GM18951 (cell line): ENCODE measurements at regions of chr9 and their contacts with region 1.

Region 1: DNA sequence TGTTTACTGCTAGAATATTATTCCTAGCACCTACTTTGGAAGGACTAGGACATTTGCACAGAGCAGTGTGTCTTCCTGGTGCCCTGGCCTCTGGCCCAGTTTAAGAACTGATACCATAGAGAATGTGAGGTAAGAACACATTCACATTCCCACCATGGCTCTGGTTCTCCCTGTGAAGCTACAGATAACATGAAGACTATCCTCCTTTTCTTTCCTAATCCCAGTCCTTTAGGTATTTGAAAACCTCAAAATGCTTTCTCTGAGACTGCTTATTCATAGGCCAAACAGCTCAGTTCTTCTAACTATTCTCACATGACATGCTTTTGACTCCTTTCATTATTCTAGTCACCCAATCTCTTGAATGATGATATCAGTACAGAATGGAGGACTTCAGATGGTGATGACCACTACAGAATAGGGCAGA is 11.9 kb downstream of the FAM219A start:
- POLR2A ChIP-seq: no peak

Region 2: DNA sequence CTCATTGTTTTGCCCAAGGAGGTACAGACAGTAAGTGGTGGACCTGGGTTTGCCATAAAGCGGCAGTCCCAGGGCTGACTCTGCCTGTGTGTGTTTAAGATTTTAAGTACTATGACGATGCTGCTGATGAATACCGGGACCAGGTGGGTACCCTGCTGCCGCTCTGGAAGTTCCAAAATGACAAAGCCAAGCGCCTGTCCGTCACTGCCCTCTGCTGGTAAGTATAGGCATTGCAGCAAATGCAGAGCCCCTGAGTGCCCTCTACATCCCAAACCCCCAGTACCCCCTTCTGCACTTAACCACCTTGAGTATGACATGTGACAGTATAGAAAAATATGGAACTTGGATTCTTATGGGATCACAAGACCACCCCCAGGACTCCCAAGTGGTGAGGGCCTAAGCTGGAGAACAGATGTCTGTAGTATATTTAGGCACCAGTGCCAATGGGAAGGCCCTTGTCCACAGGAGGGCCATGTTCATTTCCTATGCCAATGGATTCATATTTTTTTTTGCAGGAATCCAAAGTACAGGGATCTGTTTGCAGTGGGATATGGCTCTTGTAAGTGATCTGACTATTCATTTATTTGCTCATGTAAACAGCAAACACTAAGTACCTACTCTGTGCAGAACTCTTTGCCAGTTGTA is 54.3 kb after region 1 on chr9:
- in situ Hi-C with region 1: loop called (anchors 10 kb)
- POLR2A ChIP-seq: no peak

Region 3: GRCh38 chr9:34948451-34948850 is 502.0 kb after region 1 on chr9:
- in situ Hi-C with region 1: no loop called
- POLR2A ChIP-seq: no peak